ENCODE measurements at regions of chr12 and their contacts with region 1.

Region 1: GRCh38 chr12:113030875-113031525 is 25.5 kb upstream of the DTX1 start:
- DNase-seq: no peak
- H3K4me3 ChIP-seq: no peak overlapping the region
- H3K27ac ChIP-seq: no peak overlapping the region
- H3K4me1 ChIP-seq: no peaks in the 10 kb centered on the region
- H3K27me3 ChIP-seq: no peaks in the 10 kb centered on the region
- CTCF ChIP-seq: peak; percentile 20 to 59 (median 50)

Region 2: DNA sequence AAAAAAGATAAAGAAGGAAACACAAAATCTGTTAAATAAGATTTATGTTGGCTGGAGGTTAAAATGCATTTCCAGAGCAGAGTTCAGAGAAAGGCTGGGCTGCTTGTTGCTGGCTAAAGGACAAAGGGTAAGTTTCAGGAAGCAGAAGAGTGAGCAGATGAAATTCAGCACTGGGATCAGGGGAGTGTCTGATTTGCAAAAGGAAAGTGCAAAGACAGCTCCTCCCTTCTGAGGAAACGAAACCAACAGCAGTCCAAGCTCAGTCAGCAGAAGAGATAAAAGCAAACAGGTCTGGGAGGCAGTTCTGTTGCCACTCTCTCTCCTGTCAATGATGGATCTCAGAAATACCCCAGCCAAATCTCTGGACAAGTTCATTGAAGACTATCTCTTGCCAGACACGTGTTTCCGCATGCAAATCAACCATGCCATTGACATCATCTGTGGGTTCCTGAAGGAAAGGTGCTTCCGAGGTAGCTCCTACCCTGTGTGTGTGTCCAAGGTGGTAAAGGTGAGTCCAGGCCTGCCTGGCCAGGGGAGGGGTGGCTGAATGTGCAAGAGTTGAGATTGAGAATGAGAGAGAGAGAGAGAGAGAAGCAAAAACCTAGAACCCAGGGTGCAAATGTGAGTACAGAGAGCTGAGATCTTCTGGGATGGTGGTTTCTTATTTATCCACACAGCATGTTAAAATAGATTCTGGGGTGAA is 124.1 kb before region 1 on chr12 and contains the start of gene OAS1:
- intact Hi-C with region 1: loop called (anchors 10 kb)
- DNase-seq: no peak
- H3K4me3 ChIP-seq: peak within 1 kb of the TSS; percentile 35 to 59
- H3K27ac ChIP-seq: peak within 1 kb of the TSS; percentile 3 to 49
- H3K4me1 ChIP-seq: peaks cover 2 to 31% of the 10 kb centered on the region in 2 donors
- H3K27me3 ChIP-seq: no peaks in the 10 kb centered on the region
- CTCF ChIP-seq: no peak
- total RNA-seq, gene OAS1: 0.96 TPM

Measured in ascending aorta (tissue), 2 donors.